ENCODE measurements at regions of chr1 and their contacts with region 1.

Region 1: DNA sequence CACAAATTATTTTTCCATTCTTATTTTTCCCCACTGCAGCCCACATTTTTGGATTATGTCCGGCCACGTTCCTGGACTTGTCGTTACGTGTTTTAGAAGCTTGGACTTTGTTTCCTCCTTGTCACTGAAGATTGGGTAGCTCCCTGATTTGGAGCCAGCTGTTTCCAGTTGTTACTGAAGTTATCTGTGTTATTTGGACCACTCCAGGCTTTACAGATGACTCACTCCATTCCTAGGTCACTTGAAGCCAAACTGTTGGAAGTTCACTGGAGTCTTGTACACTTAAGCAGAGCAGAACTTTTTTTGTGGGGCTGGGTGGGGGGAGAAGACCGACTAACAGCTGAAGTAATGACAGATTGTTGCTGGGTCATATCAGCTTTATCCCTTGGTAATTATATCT is 12.2 kb upstream of the AXDND1 start:
- DNase-seq: no peak
- ATAC-seq: no peak
- H3K4me3 ChIP-seq: no peak overlapping the region
- H3K4me3 Mint-ChIP-seq: no peak overlapping the region
- H3K27ac ChIP-seq: no peak overlapping the region
- H3K27ac Mint-ChIP-seq: peak overlapping the region in 5 of 9 donors; percentile 16 to 71 (median 37)
- H3K4me1 ChIP-seq: no peaks in the 10 kb centered on the region
- H3K4me1 Mint-ChIP-seq: peaks cover 0 to 5% (median 0%) of the 10 kb centered on the region in 7 donors
- H3K27me3 ChIP-seq: no peaks in the 10 kb centered on the region
- H3K27me3 Mint-ChIP-seq: no peaks in the 10 kb centered on the region

Region 2: DNA sequence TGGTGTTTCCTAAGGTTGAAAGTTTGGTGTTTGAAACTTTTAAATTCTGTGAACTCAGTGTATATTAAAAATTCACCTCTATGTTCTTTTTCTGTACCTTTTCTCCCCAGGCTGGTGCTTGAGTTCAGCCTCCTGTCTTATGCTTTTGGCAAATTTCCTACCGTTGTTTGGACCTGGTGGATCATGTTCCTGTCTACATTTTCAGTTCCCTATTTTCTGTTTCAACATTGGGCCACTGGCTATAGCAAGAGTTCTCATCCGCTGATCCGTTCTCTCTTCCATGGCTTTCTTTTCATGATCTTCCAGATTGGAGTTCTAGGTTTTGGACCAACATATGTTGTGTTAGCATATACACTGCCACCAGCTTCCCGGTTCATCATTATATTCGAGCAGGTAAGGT is 12.6 kb before region 1 on chr1:
- CTCF ChIA-PET with region 1: no interaction called
- POLR2A ChIA-PET with region 1: no interaction called
- intact Hi-C with region 1: loop called in 1 of 2 experiments (anchors 2 kb)
- DNase-seq: no peak
- ATAC-seq: no peak
- H3K4me3 ChIP-seq: no peak overlapping the region
- H3K4me3 Mint-ChIP-seq: no peak overlapping the region
- H3K27ac ChIP-seq: no peak overlapping the region
- H3K27ac Mint-ChIP-seq: peak overlapping the region in 1 of 9 donors; percentile 77
- H3K4me1 ChIP-seq: no peaks in the 10 kb centered on the region
- H3K4me1 Mint-ChIP-seq: peaks cover 0 to 3% (median 0%) of the 10 kb centered on the region in 7 donors
- H3K27me3 ChIP-seq: no peaks in the 10 kb centered on the region
- H3K27me3 Mint-ChIP-seq: no peaks in the 10 kb centered on the region